Ascending aorta (tissue), 2 donors: ENCODE measurements at regions of chrX and their contacts with region 1.

Region 1: DNA sequence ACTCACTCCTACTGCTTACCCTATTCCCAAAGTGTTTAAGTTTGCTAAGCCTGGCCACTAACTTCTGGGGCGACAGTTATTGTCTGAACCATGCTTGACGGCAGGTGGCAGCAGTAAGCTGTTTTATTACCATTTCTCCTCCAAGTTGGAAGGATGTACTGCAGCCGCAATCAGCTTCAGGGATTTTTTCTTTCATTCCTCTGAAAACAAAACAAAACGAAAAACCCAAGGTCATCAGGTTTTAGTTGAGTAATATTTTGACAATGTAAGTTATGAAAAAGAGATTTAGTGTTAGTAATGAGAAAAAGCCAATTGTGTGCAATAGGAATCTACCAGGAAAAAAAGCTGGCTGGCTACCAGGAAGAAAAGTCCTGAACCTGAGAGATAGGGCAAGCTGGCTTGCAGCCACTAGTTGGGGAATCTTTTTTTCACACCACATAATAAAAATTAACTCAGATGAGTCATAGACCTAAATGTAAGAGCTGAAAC is 13.2 kb upstream of the RAB9B start:
- DNase-seq: peak in 1 of 2 donors; percentile 81
- H3K4me3 ChIP-seq: no peak overlapping the region
- H3K27ac ChIP-seq: no peak overlapping the region
- H3K4me1 ChIP-seq: no peaks in the 10 kb centered on the region
- H3K27me3 ChIP-seq: peaks cover 3% of the 10 kb centered on the region
- CTCF ChIP-seq: peak; percentile 51 to 65 (median 57)

Region 2: GRCh38 chrX:103730796-103731493 is 114.3 kb before region 1 on chrX:
- intact Hi-C with region 1: no loop called
- DNase-seq: no peak
- H3K4me3 ChIP-seq: no peak overlapping the region
- H3K27ac ChIP-seq: peak overlapping the region; percentile 20 to 65
- H3K4me1 ChIP-seq: no peaks in the 10 kb centered on the region
- H3K27me3 ChIP-seq: no peaks in the 10 kb centered on the region
- CTCF ChIP-seq: no peak

Region 3: GRCh38 chrX:103941201-103941975 is 96.2 kb after region 1 on chrX:
- intact Hi-C with region 1: loop called (anchors 1 kb)
- DNase-seq: no peak
- H3K4me3 ChIP-seq: no peak overlapping the region
- H3K27ac ChIP-seq: no peak overlapping the region
- H3K4me1 ChIP-seq: no peaks in the 10 kb centered on the region
- H3K27me3 ChIP-seq: no peaks in the 10 kb centered on the region
- CTCF ChIP-seq: peak in 2 of 3 experiments; percentile 33 to 56

Region 4: GRCh38 chrX:104136241-104137019 is 291.2 kb after region 1 on chrX:
- intact Hi-C with region 1: loop called (anchors 5 kb)
- DNase-seq: peak in 1 of 2 donors; percentile 84
- H3K4me3 ChIP-seq: peak overlapping the region; percentile 24 to 52
- H3K27ac ChIP-seq: peak overlapping the region; percentile 45 to 60
- H3K4me1 ChIP-seq: no peaks in the 10 kb centered on the region
- H3K27me3 ChIP-seq: no peaks in the 10 kb centered on the region
- CTCF ChIP-seq: peak; percentile 62 to 78 (median 69)

Region 5: DNA sequence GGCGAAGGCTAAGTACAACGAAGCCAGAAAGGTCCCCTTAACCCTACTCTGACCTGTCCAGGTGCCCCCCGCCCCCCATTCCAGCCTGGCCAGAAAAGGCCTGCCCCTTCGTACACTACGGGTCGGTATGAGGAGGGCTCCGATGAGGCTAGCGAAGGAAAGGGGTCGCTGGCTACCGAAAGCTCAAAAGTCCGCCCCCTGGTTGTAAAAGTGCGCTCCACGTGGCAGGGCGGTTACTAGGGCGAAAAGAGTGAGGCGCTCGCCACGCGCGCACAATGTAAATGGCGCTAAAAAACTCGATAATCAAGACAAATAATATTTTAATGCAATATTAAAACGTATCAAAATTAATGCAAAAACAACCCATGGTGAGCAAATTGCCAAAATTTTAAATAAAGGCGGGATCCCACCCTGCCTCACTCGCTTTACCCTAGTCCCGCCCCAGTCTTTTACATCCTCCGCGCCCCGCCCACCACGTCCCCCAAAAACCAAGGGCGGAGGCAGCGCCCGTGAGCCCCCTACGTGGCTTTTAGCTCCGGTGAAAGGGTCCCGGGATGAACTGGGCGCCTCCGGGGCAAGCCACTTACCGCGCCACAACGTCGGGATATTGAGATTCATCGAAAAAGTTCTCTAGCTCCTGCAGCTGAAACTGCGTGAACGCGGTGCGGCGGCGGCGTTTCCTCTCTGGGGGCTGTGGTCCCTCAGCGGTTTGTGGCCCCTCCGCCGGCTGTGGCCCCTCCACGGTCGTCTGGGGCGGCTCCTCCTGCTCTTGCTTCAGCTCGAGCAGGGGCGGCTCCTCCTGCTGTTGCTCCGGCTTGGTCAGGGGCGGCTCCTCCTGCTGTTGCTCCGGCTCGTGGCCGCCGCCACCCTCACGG is 408.6 kb after region 1 on chrX:
- intact Hi-C with region 1: no loop called
- DNase-seq: no peak
- H3K4me3 ChIP-seq: peak overlapping the region; percentile 11 to 39
- H3K27ac ChIP-seq: no peak overlapping the region
- H3K4me1 ChIP-seq: no peaks in the 10 kb centered on the region
- H3K27me3 ChIP-seq: peaks cover 13% of the 10 kb centered on the region
- CTCF ChIP-seq: no peak